Left ventricle myocardium inferior (tissue), 1 donor: ENCODE measurements at regions of chr11 and their contacts with region 1.

Region 1: DNA sequence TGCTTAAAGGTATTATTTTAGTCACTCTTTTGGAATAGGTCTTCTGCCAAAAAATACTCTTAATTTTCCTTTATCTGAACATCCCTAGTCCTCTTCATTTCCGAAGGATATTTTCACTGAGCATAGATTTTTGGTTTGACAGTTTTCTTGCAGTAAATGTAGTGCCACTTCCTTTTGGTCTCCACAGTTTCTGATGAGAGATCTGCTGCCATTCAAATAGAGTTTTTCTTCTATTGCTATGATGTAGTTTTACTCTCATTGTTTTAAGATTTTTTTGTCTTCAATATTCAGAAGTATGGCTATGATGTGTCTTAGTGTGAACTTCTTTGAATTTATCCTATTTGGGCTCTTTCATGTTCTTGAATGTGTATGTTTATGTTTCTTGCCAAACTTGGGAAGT is 281.1 kb upstream of the SORL1-AS1 start:
- DNase-seq: no peak
- H3K4me3 ChIP-seq: no peak overlapping the region
- H3K27ac ChIP-seq: no peak overlapping the region
- H3K4me1 ChIP-seq: no peaks in the 10 kb centered on the region
- H3K27me3 ChIP-seq: no peaks in the 10 kb centered on the region
- CTCF ChIP-seq: no peak

Region 2: DNA sequence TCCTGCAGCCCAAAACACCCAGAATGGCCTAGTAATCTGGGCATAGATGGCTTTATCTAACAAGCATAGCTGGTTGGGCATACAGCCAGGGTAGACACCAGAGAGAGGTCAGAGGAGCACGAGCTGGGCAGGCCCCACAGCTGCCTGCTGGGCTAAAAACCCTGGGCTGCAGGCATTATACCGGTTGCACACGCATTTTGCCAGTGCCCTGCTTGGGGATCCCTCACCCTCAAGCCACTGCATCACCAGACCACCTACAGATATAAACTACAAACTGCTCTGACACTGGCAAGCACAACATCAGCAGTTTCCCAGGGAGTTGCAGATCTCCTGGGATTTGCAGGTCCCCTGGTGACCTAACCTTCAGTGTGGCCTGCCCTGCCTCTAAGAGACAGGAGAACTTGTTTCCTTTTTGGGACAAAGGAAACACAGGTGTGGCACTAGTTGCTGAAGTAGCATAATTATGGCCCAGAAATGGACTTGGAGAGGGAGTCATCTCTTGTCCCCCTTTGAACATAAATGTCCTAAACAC is 520.4 kb before region 1 on chr11:
- intact Hi-C with region 1: no loop called
- DNase-seq: no peak
- H3K4me3 ChIP-seq: no peak overlapping the region
- H3K27ac ChIP-seq: no peak overlapping the region
- H3K4me1 ChIP-seq: peaks cover 9% of the 10 kb centered on the region
- H3K27me3 ChIP-seq: peaks cover 13% of the 10 kb centered on the region
- CTCF ChIP-seq: no peak

Region 3: GRCh38 chr11:121688055-121688491 is 45.8 kb before region 1 on chr11:
- intact Hi-C with region 1: loop called (anchors 2 kb)
- DNase-seq: no peak
- H3K4me3 ChIP-seq: no peak overlapping the region
- H3K27ac ChIP-seq: no peak overlapping the region
- H3K4me1 ChIP-seq: no peaks in the 10 kb centered on the region
- H3K27me3 ChIP-seq: no peaks in the 10 kb centered on the region
- CTCF ChIP-seq: no peak

Region 4: GRCh38 chr11:121829159-121829643 is 95.3 kb after region 1 on chr11:
- intact Hi-C with region 1: no loop called
- DNase-seq: no peak
- H3K4me3 ChIP-seq: no peak overlapping the region
- H3K27ac ChIP-seq: peak overlapping the region; percentile 34
- H3K4me1 ChIP-seq: no peaks in the 10 kb centered on the region
- H3K27me3 ChIP-seq: no peaks in the 10 kb centered on the region
- CTCF ChIP-seq: no peak